CD4-positive, alpha-beta T cell (primary cell): ENCODE measurements at regions of chr17 and their contacts with region 1.

Region 1: GRCh38 chr17:47949136-47949759 is 7.9 kb downstream of the PNPO start:
- DNase-seq: peak; percentile 57 to 89 (median 74)
- ATAC-seq: peak; percentile 66
- H3K4me3 ChIP-seq: peak overlapping the region; percentile 51
- H3K4me3 Mint-ChIP-seq: peak overlapping the region; percentile 36
- H3K27ac ChIP-seq: peak overlapping the region in 1 of 2 donors; percentile 58
- H3K27ac Mint-ChIP-seq: peak overlapping the region; percentile 32
- H3K4me1 ChIP-seq: peaks cover 51% of the 10 kb centered on the region
- H3K4me1 Mint-ChIP-seq: peaks cover 44% of the 10 kb centered on the region
- H3K27me3 ChIP-seq: no peaks in the 10 kb centered on the region
- H3K27me3 Mint-ChIP-seq: no peaks in the 10 kb centered on the region
- CTCF ChIP-seq: peak; percentile 95

Region 2: DNA sequence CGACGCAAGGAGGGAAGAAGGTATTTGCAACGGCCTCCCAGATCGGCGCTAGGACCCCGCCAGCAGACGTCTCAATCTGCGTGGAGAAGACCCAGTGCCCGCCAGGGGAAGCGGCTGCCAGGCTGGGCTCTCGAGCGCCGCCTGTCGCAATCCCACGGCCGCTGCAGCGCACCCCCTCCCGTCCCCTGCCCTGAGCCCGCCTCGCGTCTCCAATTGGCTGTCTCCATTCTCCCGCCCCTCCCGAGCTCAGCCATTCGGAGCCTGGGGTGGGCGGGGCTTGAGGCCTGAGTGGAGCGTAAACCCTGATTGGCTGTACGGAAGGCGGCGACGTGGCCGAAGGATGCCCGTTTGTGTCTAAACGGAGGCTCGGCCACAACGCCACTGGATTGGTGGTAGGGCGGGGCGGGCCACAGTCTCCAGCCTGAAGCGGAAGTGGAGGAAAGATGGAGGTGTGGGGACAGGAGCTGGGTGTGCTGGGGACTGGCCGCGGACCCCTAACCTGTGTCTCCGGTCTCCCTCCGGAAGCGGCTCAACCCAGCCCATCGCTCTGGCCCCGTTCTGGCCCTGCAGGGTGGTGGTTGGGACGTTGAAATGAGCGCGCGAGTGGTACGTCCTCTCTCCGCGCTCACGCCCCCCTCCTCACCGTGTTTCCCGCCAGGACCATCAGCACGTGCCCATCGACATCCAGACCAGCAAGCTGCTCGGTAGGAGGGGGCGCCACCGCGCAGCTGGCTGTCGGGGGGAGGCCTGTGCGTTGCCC is 21.6 kb after region 1 on chr17 and contains the start of gene CDK5RAP3:
- CTCF ChIA-PET with region 1: interaction called, 70 read pairs
- POLR2A ChIA-PET with region 1: interaction called, 23 read pairs
- intact Hi-C with region 1: loop called in 1 of 2 experiments (anchors 1 kb)
- DNase-seq: peak; percentile 95 to 99 (median 98)
- ATAC-seq: peak; percentile 98
- H3K4me3 ChIP-seq: peak within 1 kb of the TSS; percentile 99
- H3K4me3 Mint-ChIP-seq: peak within 1 kb of the TSS; percentile 99
- H3K27ac ChIP-seq: peak within 1 kb of the TSS; percentile 32 to 72
- H3K27ac Mint-ChIP-seq: peak within 1 kb of the TSS; percentile 86
- H3K4me1 ChIP-seq: peaks cover 26% of the 10 kb centered on the region
- H3K4me1 Mint-ChIP-seq: peaks cover 26% of the 10 kb centered on the region
- H3K27me3 ChIP-seq: no peaks in the 10 kb centered on the region
- H3K27me3 Mint-ChIP-seq: no peaks in the 10 kb centered on the region
- CTCF ChIP-seq: peak; percentile 92
- total RNA-seq, gene CDK5RAP3: 206 to 224 TPM

Region 3: DNA sequence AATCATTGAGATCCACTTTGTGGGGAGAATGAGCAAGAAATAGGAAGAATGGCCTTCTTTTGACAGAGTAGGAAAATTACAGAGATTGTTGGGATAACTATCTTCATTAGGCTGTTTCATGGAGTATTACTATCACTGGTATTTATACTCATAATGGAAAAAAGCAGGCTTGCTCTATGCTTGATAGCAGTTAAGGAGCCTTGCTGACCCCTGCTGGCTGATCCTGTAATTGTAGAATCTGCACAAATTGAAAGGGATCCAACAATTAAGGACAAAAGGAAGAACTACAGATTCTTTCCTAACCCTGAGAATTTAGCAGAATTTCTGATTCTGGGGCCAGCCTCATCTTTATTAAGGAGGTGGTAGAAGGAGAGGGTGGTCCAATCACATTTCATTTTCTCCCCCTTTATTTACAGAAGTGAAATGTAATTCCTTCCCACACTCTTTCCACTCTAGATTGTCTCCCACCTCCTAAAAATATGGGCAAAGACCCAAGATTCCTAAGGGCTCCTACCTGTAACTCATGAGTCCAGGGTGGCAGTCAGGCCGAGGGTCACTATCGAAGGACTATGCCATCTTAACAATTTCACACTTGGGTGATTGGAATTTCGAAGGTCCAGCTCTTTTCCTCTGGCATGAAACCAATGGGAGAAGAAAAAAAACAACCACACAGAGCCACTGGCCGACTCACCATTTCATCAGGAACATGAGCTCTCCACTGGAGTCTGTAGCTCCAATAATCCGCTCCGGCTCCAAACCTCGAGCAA is 125.2 kb after region 1 on chr17:
- CTCF ChIA-PET with region 1: no interaction called
- POLR2A ChIA-PET with region 1: no interaction called
- intact Hi-C with region 1: loop called in 1 of 2 experiments (anchors 1 kb)
- DNase-seq: peak; percentile 55 to 84 (median 70)
- ATAC-seq: peak; percentile 86
- H3K4me3 ChIP-seq: no peak overlapping the region
- H3K4me3 Mint-ChIP-seq: no peak overlapping the region
- H3K27ac ChIP-seq: no peak overlapping the region
- H3K27ac Mint-ChIP-seq: no peak overlapping the region
- H3K4me1 ChIP-seq: no peaks in the 10 kb centered on the region
- H3K4me1 Mint-ChIP-seq: no peaks in the 10 kb centered on the region
- H3K27me3 ChIP-seq: no peaks in the 10 kb centered on the region
- H3K27me3 Mint-ChIP-seq: no peaks in the 10 kb centered on the region
- CTCF ChIP-seq: peak; percentile 85